Activated naive CD4-positive, alpha-beta T cell treated with anti-CD3 and anti-CD28 coated beads for 36 hours (primary cell): ENCODE measurements at regions of chr18 and their contacts with region 1.

Region 1: GRCh38 chr18:62281684-62282083 is 43.4 kb upstream of the TNFRSF11A start:
- DNase-seq: no peak
- H3K4me3 Mint-ChIP-seq: no peak overlapping the region
- H3K27ac Mint-ChIP-seq: no peak overlapping the region
- H3K4me1 Mint-ChIP-seq: peaks cover 39% of the 10 kb centered on the region
- H3K27me3 Mint-ChIP-seq: no peaks in the 10 kb centered on the region

Region 2: GRCh38 chr18:62258616-62259015 is 23.1 kb before region 1 on chr18:
- CTCF ChIA-PET with region 1: no interaction called
- intact Hi-C with region 1: loop called (anchors 2 kb)
- DNase-seq: no peak
- H3K4me3 Mint-ChIP-seq: no peak overlapping the region
- H3K27ac Mint-ChIP-seq: no peak overlapping the region
- H3K4me1 Mint-ChIP-seq: no peaks in the 10 kb centered on the region
- H3K27me3 Mint-ChIP-seq: no peaks in the 10 kb centered on the region

Region 3: GRCh38 chr18:62437235-62438017 is 155.7 kb after region 1 on chr18:
- CTCF ChIA-PET with region 1: no interaction called
- intact Hi-C with region 1: no loop called
- DNase-seq: no peak
- H3K4me3 Mint-ChIP-seq: no peak overlapping the region
- H3K27ac Mint-ChIP-seq: peak overlapping the region; percentile 15
- H3K4me1 Mint-ChIP-seq: no peaks in the 10 kb centered on the region
- H3K27me3 Mint-ChIP-seq: peaks cover 6% of the 10 kb centered on the region